MCF 10A (cell line): ENCODE measurements at regions of chrX and their contacts with region 1.

Region 1: DNA sequence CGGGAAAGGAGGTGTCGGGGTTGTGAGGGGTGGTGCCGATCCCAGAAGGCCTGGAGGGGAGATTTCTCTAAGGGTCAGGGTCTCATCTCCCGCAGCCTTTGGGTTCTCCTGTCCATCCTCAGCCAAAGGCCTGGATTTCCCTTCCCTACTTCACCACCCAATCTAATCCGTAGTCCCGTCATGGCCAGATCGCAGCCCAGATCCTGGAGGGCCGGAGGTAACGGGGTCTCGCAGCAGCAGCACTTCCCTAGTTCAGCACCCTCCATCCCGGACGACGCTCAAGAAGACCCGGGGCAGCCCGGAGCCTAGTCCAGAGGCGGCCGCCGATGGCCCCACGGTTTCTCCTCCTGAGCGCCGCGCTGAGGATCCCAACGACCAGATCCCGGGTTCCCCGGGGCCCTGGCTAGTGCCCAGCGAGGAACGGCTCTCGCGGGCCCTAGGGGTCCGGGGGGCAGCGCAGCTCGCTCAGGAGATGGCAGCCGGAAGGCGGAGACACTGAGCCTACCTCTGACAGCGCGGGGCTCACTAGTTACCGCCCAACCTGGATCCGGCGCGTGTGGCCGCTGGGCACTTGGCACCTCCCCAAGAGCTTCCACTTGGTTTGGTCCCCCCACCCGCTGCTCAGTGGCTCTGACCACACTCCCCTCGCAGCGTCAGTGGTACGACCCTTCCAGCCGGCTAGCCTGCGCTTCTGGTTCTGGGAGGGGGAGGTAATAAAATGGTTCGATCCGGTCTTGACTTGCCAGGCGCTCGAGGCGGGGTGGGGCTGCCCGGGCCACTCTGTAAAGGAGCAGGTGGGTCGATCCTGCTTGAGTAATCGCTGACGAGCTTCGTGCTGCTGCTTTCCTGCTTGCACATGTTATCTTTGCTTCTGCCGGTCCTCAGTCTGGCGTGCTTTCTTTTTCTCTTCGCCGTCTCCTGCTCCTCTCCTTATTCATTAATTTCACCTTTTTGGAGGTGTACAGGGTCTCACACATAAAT is 3.6 kb downstream of the MAGIX start:
- DNase-seq: peak; percentile 88
- H3K4me3 Mint-ChIP-seq: peak overlapping the region; percentile 91
- H3K27ac Mint-ChIP-seq: peak overlapping the region; percentile 97
- H3K4me1 Mint-ChIP-seq: peaks cover 13% of the 10 kb centered on the region
- H3K27me3 Mint-ChIP-seq: no peaks in the 10 kb centered on the region
- CTCF ChIP-seq: peak; percentile 21

Region 2: DNA sequence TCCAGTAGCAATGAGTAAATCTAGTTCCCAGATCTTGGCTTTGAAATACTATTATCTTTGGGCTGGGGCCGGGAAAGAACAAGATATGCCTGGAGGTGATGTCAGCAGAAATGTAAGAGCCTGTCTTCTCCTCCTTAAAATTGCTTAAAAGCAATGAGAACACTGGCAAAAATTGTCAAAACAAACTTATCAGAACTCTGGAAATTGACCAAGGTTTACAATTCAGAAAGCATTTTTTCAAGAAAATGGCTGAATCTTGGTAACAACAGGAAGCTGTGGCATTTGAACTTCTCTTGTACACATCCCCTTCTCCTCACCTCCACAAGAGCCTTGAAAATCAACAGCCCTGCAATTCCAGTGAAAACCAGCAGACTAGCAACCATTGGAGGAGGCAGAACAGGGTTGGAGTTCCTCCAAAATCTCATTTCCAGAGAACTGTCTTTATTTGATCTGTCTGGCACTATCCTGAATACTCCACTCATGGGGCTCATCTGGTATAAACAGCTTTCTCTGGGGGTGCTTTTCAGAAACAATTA is 1570.4 kb before region 1 on chrX:
- CTCF ChIA-PET with region 1: no interaction called
- POLR2A ChIA-PET with region 1: no interaction called
- intact Hi-C with region 1: no loop called
- DNase-seq: peak; percentile 70
- H3K4me3 Mint-ChIP-seq: no peak overlapping the region
- H3K27ac Mint-ChIP-seq: peak overlapping the region; percentile 59
- H3K4me1 Mint-ChIP-seq: peaks cover 4% of the 10 kb centered on the region
- H3K27me3 Mint-ChIP-seq: no peaks in the 10 kb centered on the region
- CTCF ChIP-seq: no peak

Region 3: DNA sequence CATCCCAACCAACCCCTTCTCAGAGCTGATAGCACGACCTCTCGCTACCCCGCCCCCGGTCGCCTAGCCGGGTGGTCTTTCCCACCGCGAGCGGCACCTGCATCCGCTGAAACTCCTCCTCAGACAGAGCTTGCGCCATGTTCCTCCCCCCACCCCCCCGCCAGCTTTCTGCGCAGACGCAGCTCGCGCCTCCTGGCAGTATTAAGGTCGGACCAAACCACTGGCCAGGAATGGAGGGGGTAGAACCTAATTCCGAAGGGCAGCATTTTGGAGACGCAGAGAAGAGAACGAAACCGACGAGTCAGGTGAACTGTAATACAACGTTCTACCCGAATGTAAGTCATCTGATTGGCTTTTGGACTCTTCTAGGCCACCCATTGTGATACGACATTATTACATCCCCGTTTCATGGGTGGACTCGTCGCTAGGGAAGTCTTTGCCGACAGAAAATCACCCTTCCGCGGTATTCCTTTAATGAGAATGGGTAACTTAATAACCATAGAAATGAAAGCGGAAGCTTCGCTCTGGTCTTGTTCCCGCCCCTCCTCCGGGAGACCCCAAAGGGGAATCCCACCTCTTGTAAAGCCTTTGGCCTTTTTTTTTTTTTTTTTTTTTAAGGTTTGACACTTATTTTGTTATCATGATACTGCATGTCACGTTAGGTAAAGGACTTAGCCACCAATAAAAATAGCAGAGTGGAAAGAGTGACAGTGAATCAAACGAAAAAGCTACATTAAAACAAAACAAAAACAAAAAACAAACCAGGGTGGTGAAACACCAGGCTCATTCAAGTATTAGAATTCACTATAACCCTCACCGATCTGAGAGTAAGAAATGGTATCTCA is 163.9 kb before region 1 on chrX and contains the start of gene GRIPAP1:
- CTCF ChIA-PET with region 1: no interaction called
- POLR2A ChIA-PET with region 1: interaction called, 10 read pairs
- intact Hi-C with region 1: no loop called
- DNase-seq: peak; percentile 80
- H3K4me3 Mint-ChIP-seq: peak within 1 kb of the TSS; percentile 95
- H3K27ac Mint-ChIP-seq: peak within 1 kb of the TSS; percentile 97
- H3K4me1 Mint-ChIP-seq: peaks cover 10% of the 10 kb centered on the region
- H3K27me3 Mint-ChIP-seq: no peaks in the 10 kb centered on the region
- CTCF ChIP-seq: no peak
- total RNA-seq, gene GRIPAP1: 49.6 and 51.0 TPM in 2 replicates

Region 4: GRCh38 chrX:49155900-49156837 is 10.0 kb before region 1 on chrX:
- CTCF ChIA-PET with region 1: interaction called, 6 read pairs
- POLR2A ChIA-PET with region 1: interaction called, 31 read pairs
- intact Hi-C with region 1: loop called (anchors 1 kb)
- DNase-seq: peak; percentile 91
- H3K4me3 Mint-ChIP-seq: peak overlapping the region; percentile 96
- H3K27ac Mint-ChIP-seq: peak overlapping the region; percentile 99
- H3K4me1 Mint-ChIP-seq: peaks cover 7% of the 10 kb centered on the region
- H3K27me3 Mint-ChIP-seq: no peaks in the 10 kb centered on the region
- CTCF ChIP-seq: peak; percentile 46

Region 5: DNA sequence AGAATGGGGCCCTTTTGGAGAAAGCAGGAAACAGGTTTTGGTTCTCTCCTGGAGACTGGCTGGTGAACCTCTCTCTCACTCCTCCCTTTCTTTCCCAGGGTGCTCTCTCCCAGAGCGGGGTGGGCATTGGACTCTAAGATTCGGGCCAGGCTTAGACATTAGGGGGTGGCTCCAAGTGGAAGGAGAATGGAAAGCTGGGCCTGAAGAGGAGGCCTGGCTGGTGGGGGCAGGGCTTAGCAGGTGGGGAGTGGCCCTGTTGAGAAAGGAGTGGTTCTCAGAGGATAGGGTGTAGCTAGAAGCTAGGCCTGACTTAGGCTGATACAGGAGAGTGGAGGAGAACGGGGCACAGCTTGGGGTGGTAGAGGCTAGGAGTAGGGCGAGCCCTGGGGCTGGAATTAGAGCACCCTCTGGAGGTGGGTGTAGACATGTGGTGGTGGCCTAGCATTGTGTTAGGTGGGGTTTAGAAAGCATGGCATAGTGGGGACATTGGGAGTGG is 11.2 kb after region 1 on chrX:
- CTCF ChIA-PET with region 1: interaction called, 3 read pairs
- POLR2A ChIA-PET with region 1: interaction called, 27 read pairs
- intact Hi-C with region 1: no loop called
- DNase-seq: peak; percentile 54
- H3K4me3 Mint-ChIP-seq: no peak overlapping the region
- H3K27ac Mint-ChIP-seq: peak overlapping the region; percentile 47
- H3K4me1 Mint-ChIP-seq: peaks cover 21% of the 10 kb centered on the region
- H3K27me3 Mint-ChIP-seq: no peaks in the 10 kb centered on the region
- CTCF ChIP-seq: no peak

Region 6: DNA sequence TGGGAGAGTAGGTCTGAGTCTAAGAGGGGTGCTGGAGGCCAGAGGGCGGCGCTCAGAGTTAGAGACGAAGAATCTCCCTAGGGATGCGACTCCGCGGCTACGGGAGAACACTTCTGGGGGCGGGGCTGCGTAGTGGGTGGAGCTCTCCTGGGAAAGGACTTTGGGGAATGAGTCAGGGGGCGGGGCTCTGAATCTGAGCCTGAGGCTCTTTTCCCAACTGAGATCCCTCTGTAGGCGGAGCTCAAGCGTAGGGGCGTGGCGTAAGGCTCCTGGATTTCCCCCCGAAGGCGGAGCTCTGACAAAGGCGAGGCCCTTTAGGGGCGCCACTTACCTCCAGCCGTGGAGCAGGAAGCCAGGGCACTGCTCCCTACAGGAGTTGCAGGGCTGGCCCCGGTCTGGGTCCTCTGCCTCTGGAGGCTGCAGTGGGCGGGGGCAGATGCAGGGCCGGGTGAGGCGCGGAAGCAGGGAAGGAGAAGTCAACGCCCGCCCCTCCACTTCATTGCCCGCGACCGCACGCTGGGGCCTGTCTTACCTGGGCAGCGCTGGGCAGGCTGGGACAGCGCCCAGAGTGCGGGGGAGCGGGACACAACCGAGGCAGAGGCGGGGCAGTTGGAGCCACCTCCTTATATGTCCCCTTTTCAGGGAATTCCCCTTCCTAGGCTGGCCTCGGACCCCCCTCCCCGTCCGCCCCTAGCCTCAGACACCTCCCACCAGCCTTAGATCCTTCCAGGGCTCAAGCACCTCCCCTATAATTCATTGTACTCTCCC is 18.3 kb after region 1 on chrX:
- CTCF ChIA-PET with region 1: no interaction called
- POLR2A ChIA-PET with region 1: interaction called, 48 read pairs
- intact Hi-C with region 1: loop called (anchors 1 kb)
- DNase-seq: peak; percentile 94
- H3K4me3 Mint-ChIP-seq: peak overlapping the region; percentile 75
- H3K27ac Mint-ChIP-seq: no peak overlapping the region
- H3K4me1 Mint-ChIP-seq: peaks cover 11% of the 10 kb centered on the region
- H3K27me3 Mint-ChIP-seq: no peaks in the 10 kb centered on the region
- CTCF ChIP-seq: no peak